ENCODE measurements at regions of chr7 and their contacts with region 1.

Region 1: GRCh38 chr7:128883622-128884501 is 21.2 kb downstream of the ATP6V1F start:
- DNase-seq: peak; percentile 95
- H3K4me3 Mint-ChIP-seq: no peak overlapping the region
- H3K27ac Mint-ChIP-seq: no peak overlapping the region
- H3K4me1 Mint-ChIP-seq: peaks cover 2% of the 10 kb centered on the region
- H3K27me3 Mint-ChIP-seq: peaks cover 2% of the 10 kb centered on the region

Region 2: GRCh38 chr7:128672912-128673517 is 210.8 kb before region 1 on chr7:
- intact Hi-C with region 1: loop called (anchors 2 kb)
- DNase-seq: peak; percentile 66
- H3K4me3 Mint-ChIP-seq: no peak overlapping the region
- H3K27ac Mint-ChIP-seq: no peak overlapping the region
- H3K4me1 Mint-ChIP-seq: no peaks in the 10 kb centered on the region
- H3K27me3 Mint-ChIP-seq: peaks cover 13% of the 10 kb centered on the region

Region 3: GRCh38 chr7:128791121-128791961 is 92.5 kb before region 1 on chr7:
- intact Hi-C with region 1: loop called (anchors 5 kb)
- DNase-seq: peak; percentile 93
- H3K4me3 Mint-ChIP-seq: peak overlapping the region; percentile 88
- H3K27ac Mint-ChIP-seq: peak overlapping the region; percentile 64
- H3K4me1 Mint-ChIP-seq: peaks cover 9% of the 10 kb centered on the region
- H3K27me3 Mint-ChIP-seq: peaks cover 32% of the 10 kb centered on the region

Region 4: DNA sequence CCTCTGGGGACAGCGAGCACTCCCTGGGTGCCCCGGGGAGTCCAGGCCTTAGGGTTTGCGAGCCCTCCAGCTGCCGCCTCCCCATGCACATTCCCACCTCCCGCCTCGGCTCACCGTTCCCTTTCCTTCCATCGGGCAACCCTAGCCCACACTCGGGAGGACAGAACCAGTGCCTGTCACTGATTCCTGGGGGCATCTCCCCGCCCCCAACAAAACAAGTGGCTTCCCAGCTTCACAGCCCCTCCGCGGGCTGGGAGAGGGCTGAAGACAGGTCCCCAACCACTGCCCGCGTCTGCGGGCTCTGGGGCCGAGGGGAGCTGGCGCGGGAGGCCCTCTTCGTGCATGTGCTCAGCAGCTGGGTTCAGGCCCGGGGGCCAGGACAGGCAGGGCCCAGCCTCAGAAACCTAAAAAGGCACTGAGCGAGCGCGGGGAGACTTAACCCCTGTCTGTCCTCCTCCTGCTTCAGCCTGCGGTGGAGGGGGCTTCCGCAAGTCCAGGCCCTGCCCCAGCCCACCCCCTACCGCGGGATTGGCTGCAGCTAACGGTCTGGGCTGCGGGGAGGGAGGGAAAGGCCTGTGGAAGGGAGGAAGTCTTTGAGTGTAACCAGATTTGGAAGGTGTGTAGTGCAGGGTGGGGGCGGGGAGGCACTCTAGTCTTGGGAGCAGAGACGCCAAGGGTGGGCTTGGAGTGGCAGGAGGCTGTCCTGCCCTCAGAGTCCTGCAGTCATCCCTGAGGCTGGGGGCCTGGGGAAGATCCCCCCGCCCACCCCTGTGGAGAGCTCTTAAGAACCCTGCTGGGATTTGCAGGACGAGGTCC is 52.5 kb before region 1 on chr7:
- intact Hi-C with region 1: no loop called
- DNase-seq: no peak
- H3K4me3 Mint-ChIP-seq: peak overlapping the region; percentile 32
- H3K27ac Mint-ChIP-seq: no peak overlapping the region
- H3K4me1 Mint-ChIP-seq: peaks cover 8% of the 10 kb centered on the region
- H3K27me3 Mint-ChIP-seq: peaks cover 42% of the 10 kb centered on the region

Region 5: DNA sequence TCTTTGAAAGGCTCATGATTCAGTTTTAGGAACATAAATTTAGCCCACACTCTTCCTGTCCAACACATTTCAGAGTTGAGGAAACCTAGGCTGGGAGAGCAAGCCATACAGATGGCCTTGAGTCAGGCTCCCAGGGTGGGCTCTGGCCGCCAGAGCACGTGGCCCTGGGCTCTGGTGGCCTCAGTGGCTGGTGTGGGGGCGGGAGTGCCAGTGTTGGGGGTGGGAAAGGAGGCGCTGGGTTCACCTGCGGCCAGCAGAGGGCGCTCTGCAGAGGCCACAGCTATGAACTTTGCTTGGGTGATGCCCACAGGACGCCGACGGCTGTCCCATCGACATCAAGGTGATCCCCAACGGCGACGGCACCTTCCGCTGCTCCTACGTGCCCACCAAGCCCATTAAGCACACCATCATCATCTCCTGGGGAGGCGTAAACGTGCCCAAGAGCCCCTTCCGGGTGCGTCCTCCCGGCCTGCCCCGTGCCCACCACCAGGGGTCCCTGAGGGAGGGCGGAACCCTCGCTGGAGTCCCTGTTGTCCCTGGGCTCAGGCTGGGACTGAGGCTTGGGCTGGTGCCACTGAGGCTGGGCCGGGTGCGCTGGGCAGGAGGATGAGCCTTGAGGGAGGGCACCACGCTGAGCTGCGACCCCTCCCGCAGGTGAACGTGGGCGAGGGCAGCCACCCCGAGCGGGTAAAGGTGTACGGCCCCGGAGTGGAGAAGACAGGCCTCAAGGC is 41.8 kb before region 1 on chr7:
- intact Hi-C with region 1: loop called (anchors 1 kb)
- DNase-seq: peak; percentile 87
- H3K4me3 Mint-ChIP-seq: no peak overlapping the region
- H3K27ac Mint-ChIP-seq: no peak overlapping the region
- H3K4me1 Mint-ChIP-seq: no peaks in the 10 kb centered on the region
- H3K27me3 Mint-ChIP-seq: no peaks in the 10 kb centered on the region

Region 6: DNA sequence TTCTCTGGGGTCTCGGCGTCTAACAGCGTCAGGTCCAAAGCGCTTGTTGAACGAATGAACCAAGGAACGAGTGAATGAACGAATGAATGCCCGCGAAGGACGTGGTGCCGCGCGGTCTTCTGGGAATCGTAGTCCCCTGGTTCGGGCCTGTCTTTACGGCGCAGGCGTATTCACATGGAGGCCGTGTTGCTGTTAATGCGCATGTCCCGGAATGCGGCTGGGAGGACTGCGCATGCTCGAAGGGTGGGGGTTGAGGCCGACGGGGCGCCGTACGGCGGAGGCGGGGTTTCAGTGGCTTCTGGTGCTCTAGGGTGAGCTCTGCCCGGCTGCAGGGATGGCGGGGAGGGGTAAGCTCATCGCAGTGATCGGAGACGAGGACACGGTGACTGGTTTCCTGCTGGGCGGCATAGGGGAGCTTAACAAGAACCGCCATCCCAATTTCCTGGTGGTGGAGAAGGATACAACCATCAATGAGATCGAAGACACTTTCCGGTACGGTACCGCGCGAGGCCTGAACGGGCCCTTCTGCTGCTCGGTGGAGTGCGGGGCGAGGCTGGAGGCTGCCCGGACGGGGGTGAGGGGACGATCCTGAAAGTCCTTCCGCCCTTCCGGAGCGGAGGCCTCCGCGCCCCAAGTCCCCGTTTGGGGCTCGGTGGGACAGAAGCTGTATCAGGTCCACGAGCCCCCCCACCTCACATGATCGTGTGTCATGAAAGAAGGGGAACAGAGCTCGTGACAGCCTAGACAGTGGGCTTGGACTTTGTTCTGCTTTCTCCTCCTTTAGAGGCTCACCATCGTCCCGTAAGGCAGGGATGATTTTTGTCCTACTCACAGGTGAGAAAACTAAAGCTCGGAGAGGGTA is 21.1 kb before region 1 on chr7 and contains the start of gene ATP6V1F:
- intact Hi-C with region 1: loop called (anchors 1 kb)
- DNase-seq: peak; percentile 100
- H3K4me3 Mint-ChIP-seq: peak within 1 kb of the TSS; percentile 93
- H3K27ac Mint-ChIP-seq: peak within 1 kb of the TSS; percentile 96
- H3K4me1 Mint-ChIP-seq: peaks cover 24% of the 10 kb centered on the region
- H3K27me3 Mint-ChIP-seq: peaks cover 4% of the 10 kb centered on the region
- total RNA-seq, gene ATP6V1F: 127 and 132 TPM in 2 replicates

Region 7: GRCh38 chr7:128909625-128910257 is 25.9 kb after region 1 on chr7:
- intact Hi-C with region 1: no loop called
- DNase-seq: no peak
- H3K4me3 Mint-ChIP-seq: no peak overlapping the region
- H3K27ac Mint-ChIP-seq: no peak overlapping the region
- H3K4me1 Mint-ChIP-seq: no peaks in the 10 kb centered on the region
- H3K27me3 Mint-ChIP-seq: peaks cover 46% of the 10 kb centered on the region